Left cardiac atrium (tissue), 4 donors: ENCODE measurements at regions of chr19 and their contacts with region 1.

Region 1: GRCh38 chr19:18440415-18440877 is 2.5 kb upstream of the ISYNA1 start:
- DNase-seq: no peak
- ATAC-seq: no peak

Region 2: GRCh38 chr19:18675779-18676178 is 235.3 kb after region 1 on chr19:
- intact Hi-C with region 1: loop called in 1 of 2 experiments (anchors 10 kb)
- DNase-seq: no peak
- ATAC-seq: no peak